ENCODE measurements at regions of chr2 and their contacts with region 1.

Region 1: GRCh38 chr2:120343433-120344105 is 2.4 kb upstream of the INHBB start:
- DNase-seq: peak; percentile 65 to 84 (median 79)
- H3K4me3 ChIP-seq: peak overlapping the region; percentile 20
- H3K27ac ChIP-seq: no peak overlapping the region
- H3K4me1 ChIP-seq: peaks cover 10% of the 10 kb centered on the region
- H3K27me3 ChIP-seq: no peaks in the 10 kb centered on the region
- CTCF ChIP-seq: peak; percentile 58 to 90 (median 77)
- EP300 ChIP-seq: no peak
- POLR2A ChIP-seq: no peak

Region 2: GRCh38 chr2:118481299-118481698 is 1862.3 kb before region 1 on chr2:
- intact Hi-C with region 1: no loop called
- DNase-seq: no peak
- H3K4me3 ChIP-seq: no peak overlapping the region
- H3K27ac ChIP-seq: no peak overlapping the region
- H3K4me1 ChIP-seq: no peaks in the 10 kb centered on the region
- H3K27me3 ChIP-seq: no peaks in the 10 kb centered on the region
- CTCF ChIP-seq: no peak
- EP300 ChIP-seq: no peak
- POLR2A ChIP-seq: no peak

Region 3: DNA sequence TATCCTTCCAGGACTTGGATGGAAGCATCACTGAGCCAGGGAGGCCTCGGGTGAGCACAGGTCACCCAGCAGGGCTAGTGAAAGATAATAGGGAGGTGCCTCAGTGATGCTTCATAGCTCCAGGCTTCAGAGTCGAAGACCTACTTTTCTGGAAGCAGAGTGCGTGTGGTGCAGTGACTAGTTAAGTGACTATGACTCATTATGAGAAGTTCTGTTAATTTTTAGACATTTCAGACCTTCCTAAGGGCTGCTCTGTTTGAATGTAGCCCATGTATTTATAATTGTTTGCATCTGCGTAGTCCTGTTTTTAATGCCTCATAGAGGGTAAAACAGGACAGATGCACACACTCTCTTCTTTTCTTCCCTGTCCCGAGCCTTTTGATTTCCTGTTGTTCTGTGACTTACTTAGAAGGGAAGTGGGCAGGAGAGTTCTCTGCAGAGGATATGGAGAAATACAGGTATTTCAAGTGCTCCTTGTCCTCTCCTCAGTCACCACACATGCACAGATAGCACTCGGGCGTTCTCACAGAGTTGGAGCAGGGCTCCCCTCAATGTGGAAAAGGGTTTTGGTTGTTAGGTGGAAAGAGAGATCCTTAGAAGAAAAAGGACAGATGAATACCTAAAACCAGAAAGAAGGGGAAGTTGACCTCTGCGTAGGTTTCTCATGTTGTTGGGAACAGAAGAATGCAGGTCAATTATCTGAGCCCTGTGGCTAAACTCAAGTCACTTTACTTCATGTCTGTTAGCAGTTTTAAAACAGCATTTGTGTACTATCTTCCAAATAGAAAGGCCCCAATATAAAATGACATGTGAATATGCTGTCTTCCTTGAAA is 56.2 kb before region 1 on chr2:
- intact Hi-C with region 1: no loop called
- DNase-seq: no peak
- H3K4me3 ChIP-seq: no peak overlapping the region
- H3K27ac ChIP-seq: no peak overlapping the region
- H3K4me1 ChIP-seq: no peaks in the 10 kb centered on the region
- H3K27me3 ChIP-seq: no peaks in the 10 kb centered on the region
- CTCF ChIP-seq: no peak
- EP300 ChIP-seq: no peak
- POLR2A ChIP-seq: no peak

Region 4: GRCh38 chr2:120320318-120320851 is 23.2 kb before region 1 on chr2:
- intact Hi-C with region 1: loop called in 1 of 4 experiments (anchors 1 kb)
- DNase-seq: no peak
- H3K4me3 ChIP-seq: no peak overlapping the region
- H3K27ac ChIP-seq: no peak overlapping the region
- H3K4me1 ChIP-seq: no peaks in the 10 kb centered on the region
- H3K27me3 ChIP-seq: no peaks in the 10 kb centered on the region
- CTCF ChIP-seq: no peak
- EP300 ChIP-seq: no peak
- POLR2A ChIP-seq: no peak

Region 5: DNA sequence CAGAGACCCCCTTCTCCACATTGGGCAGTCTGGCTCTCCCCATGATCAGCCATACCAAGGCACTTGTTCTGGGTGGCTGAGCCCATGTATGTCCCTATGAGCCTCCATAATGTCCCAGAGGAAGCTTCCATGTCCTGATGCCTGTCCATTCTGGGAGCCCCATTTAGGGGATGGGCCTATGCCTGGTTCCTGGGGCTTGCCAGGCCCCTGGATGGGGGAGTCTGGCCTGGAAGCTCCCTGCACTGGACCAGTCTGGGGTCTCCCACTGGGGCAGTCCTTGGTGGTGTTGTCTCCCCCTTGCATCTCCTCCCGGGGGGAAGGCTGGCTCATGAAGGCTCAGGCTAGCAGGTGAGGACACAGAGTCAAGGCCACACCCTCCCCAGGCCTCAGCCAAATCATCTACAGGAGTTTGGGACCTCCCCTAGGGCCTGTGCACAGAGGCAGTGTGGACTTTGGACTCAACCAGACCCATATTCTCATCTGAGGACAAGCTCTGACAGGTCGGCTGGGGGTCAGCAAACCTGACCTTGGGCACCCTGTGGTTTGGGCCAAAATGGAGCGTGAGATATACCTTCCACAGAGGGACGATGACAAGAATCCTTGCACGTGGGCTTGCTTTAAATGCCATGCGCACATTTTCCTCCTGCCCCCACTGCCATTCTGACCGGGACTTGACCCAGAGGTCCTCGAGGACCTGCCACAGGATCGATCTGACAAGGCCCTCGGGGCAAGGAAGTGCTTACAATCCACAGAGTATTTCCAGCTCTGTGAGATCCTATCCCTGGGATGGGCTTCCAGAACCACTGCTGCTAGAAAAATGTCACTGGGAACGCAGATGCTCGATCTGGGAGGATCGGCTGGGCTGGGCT is 41.2 kb after region 1 on chr2:
- intact Hi-C with region 1: no loop called
- DNase-seq: no peak
- H3K4me3 ChIP-seq: no peak overlapping the region
- H3K27ac ChIP-seq: no peak overlapping the region
- H3K4me1 ChIP-seq: no peaks in the 10 kb centered on the region
- H3K27me3 ChIP-seq: no peaks in the 10 kb centered on the region
- CTCF ChIP-seq: no peak
- EP300 ChIP-seq: no peak
- POLR2A ChIP-seq: no peak

Region 6: GRCh38 chr2:120520929-120521912 is 177.7 kb after region 1 on chr2:
- intact Hi-C with region 1: loop called in 1 of 4 experiments (anchors 10 kb)
- DNase-seq: no peak
- H3K4me3 ChIP-seq: no peak overlapping the region
- H3K27ac ChIP-seq: no peak overlapping the region
- H3K4me1 ChIP-seq: peaks cover 5% of the 10 kb centered on the region
- H3K27me3 ChIP-seq: no peaks in the 10 kb centered on the region
- CTCF ChIP-seq: no peak
- EP300 ChIP-seq: no peak
- POLR2A ChIP-seq: no peak

Region 7: GRCh38 chr2:120552800-120553481 is 209.4 kb after region 1 on chr2:
- intact Hi-C with region 1: loop called in 1 of 4 experiments (anchors 10 kb)
- DNase-seq: peak; percentile 59 to 80 (median 66)
- H3K4me3 ChIP-seq: no peak overlapping the region
- H3K27ac ChIP-seq: no peak overlapping the region
- H3K4me1 ChIP-seq: peaks cover 11% of the 10 kb centered on the region
- H3K27me3 ChIP-seq: no peaks in the 10 kb centered on the region
- CTCF ChIP-seq: no peak
- EP300 ChIP-seq: no peak
- POLR2A ChIP-seq: no peak

Region 8: GRCh38 chr2:120680136-120680761 is 336.7 kb after region 1 on chr2:
- intact Hi-C with region 1: loop called (anchors 1 to 5 kb)
- DNase-seq: peak; percentile 77 to 87 (median 85)
- H3K4me3 ChIP-seq: no peak overlapping the region
- H3K27ac ChIP-seq: no peak overlapping the region
- H3K4me1 ChIP-seq: peaks cover 2% of the 10 kb centered on the region
- H3K27me3 ChIP-seq: no peaks in the 10 kb centered on the region
- CTCF ChIP-seq: peak in 2 of 3 donors; percentile 79 to 82
- EP300 ChIP-seq: no peak
- POLR2A ChIP-seq: no peak

Region 9: GRCh38 chr2:121076885-121077549 is 733.4 kb after region 1 on chr2:
- intact Hi-C with region 1: loop called in 3 of 4 experiments (anchors 10 kb)
- DNase-seq: peak in 3 of 5 donors; percentile 45 to 73 (median 49)
- H3K4me3 ChIP-seq: no peak overlapping the region
- H3K27ac ChIP-seq: no peak overlapping the region
- H3K4me1 ChIP-seq: no peaks in the 10 kb centered on the region
- H3K27me3 ChIP-seq: no peaks in the 10 kb centered on the region
- CTCF ChIP-seq: peak in 2 of 3 donors; percentile 17 to 22
- EP300 ChIP-seq: no peak
- POLR2A ChIP-seq: no peak

Region 10: GRCh38 chr2:121088251-121089165 is 744.9 kb after region 1 on chr2:
- intact Hi-C with region 1: loop called in 2 of 4 experiments (anchors 5 to 10 kb)
- DNase-seq: peak in 4 of 5 donors; percentile 39 to 79 (median 66)
- H3K4me3 ChIP-seq: no peak overlapping the region
- H3K27ac ChIP-seq: no peak overlapping the region
- H3K4me1 ChIP-seq: peaks cover 7% of the 10 kb centered on the region
- H3K27me3 ChIP-seq: no peaks in the 10 kb centered on the region
- CTCF ChIP-seq: no peak
- EP300 ChIP-seq: no peak
- POLR2A ChIP-seq: no peak

Measured in ovary (tissue), 10 donors.